ENCODE measurements at regions of chr1 and their contacts with region 1.

Region 1: GRCh38 chr1:247415423-247416361 is at the start of gene NLRP3:
- DNase-seq: peak in 8 of 10 donors; percentile 16 to 68 (median 42)
- ATAC-seq: peak; percentile 90 to 95
- H3K4me3 Mint-ChIP-seq: peak within 1 kb of the TSS; percentile 87 to 98 (median 90)
- H3K27ac Mint-ChIP-seq: peak within 1 kb of the TSS; percentile 76 to 96 (median 91)
- H3K4me1 Mint-ChIP-seq: peaks cover 26 to 62% (median 49%) of the 10 kb centered on the region in 4 donors
- H3K27me3 Mint-ChIP-seq: no peaks in the 10 kb centered on the region
- polyA plus RNA-seq, gene NLRP3: 0.42 to 2.4 (median 1.8) TPM

Region 2: GRCh38 chr1:247390116-247390791 is 25.4 kb before region 1 on chr1:
- POLR2A ChIA-PET with region 1: interaction called, 16 read pairs
- DNase-seq: peak; percentile 62 to 91 (median 82)
- ATAC-seq: peak; percentile 96 to 98
- H3K4me3 Mint-ChIP-seq: peak overlapping the region; percentile 64 to 87 (median 78)
- H3K27ac Mint-ChIP-seq: peak overlapping the region; percentile 37 to 93 (median 76)
- H3K4me1 Mint-ChIP-seq: peaks cover 3 to 20% (median 7%) of the 10 kb centered on the region in 4 donors
- H3K27me3 Mint-ChIP-seq: peaks cover 0 to 3% (median 0%) of the 10 kb centered on the region in 5 donors

Measured in naive thymus-derived CD8-positive, alpha-beta T cell (primary cell).